ENCODE measurements at regions of chr2 and their contacts with region 1.

Region 1: DNA sequence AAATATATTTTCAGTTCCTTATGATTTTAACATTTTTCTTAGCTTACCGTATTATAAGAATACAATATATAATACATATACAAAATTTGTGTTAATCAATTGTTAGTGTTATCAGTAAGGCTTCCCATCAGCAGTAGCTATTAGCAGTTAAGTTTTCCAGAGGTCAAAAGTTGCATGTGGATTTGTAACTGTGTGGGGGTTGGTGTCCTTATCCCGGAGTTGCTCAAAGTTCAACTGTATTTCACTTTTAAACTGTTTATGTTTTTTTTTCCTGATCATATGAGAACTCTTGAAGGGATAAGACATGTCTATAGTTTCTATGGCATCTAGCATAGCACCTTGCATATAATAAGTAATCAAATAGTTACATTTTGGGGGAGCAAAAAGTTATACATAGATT is 11.9 kb upstream of the MFSD6 start:
- DNase-seq: no peak
- ATAC-seq: no peak
- H3K4me3 Mint-ChIP-seq: no peak overlapping the region
- H3K27ac Mint-ChIP-seq: no peak overlapping the region
- H3K4me1 Mint-ChIP-seq: no peaks in the 10 kb centered on the region
- H3K27me3 Mint-ChIP-seq: peaks cover 26% of the 10 kb centered on the region

Region 2: GRCh38 chr2:190311893-190312634 is 84.2 kb before region 1 on chr2:
- CTCF ChIA-PET with region 1: no interaction called
- POLR2A ChIA-PET with region 1: no interaction called
- DNase-seq: no peak
- ATAC-seq: no peak
- H3K4me3 Mint-ChIP-seq: no peak overlapping the region
- H3K27ac Mint-ChIP-seq: no peak overlapping the region
- H3K4me1 Mint-ChIP-seq: peaks cover 10% of the 10 kb centered on the region
- H3K27me3 Mint-ChIP-seq: no peaks in the 10 kb centered on the region

Region 3: DNA sequence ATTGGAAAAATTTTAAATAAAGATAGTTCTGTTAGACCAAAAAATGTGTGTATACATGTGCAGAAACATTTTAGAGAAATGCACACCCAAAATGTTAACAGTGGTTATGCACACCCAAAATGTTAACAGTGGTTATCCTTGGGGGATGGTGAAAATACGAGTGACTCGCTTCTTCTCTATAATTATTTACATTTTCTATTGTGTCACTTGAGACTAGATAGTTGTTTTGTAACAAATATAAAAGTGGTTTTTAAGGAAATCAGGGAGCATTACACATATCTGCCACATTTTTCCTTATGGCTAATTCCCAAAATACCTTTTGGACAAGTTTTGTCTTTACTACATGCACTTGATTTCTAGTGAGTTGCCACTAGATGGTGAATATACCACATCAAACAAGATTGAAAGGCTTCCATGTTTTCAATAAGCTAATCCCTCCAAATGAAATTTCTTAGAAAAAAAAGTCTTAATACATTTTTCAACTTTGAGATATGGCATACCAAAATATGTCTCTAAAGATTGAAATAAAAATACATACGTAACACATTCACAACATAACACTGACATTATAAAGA is 67.6 kb before region 1 on chr2:
- CTCF ChIA-PET with region 1: no interaction called
- POLR2A ChIA-PET with region 1: no interaction called
- DNase-seq: no peak
- ATAC-seq: no peak
- H3K4me3 Mint-ChIP-seq: no peak overlapping the region
- H3K27ac Mint-ChIP-seq: no peak overlapping the region
- H3K4me1 Mint-ChIP-seq: no peaks in the 10 kb centered on the region
- H3K27me3 Mint-ChIP-seq: peaks cover 40% of the 10 kb centered on the region

Region 4: DNA sequence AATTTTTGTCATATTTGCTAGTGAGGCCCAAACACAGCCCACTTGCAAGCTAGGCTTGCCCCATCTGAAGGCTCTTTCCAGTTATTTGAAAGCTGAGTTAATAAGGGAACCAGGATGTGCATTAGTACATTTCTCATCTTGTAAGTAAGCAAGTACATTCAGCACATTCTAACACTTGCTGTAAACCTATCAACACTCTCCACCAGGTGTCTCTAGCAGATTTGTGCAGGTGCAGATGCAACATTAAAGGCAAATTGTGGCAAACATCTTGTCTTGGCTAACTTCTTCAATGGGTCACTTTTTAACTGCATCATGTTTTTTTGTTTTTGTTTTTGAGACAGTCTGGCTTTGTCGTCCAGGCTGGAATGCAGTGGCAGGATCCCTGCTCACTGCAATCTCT is 13.4 kb before region 1 on chr2:
- CTCF ChIA-PET with region 1: interaction called, 16 read pairs
- POLR2A ChIA-PET with region 1: no interaction called
- DNase-seq: peak; percentile 62
- ATAC-seq: peak; percentile 85
- H3K4me3 Mint-ChIP-seq: no peak overlapping the region
- H3K27ac Mint-ChIP-seq: no peak overlapping the region
- H3K4me1 Mint-ChIP-seq: no peaks in the 10 kb centered on the region
- H3K27me3 Mint-ChIP-seq: peaks cover 3% of the 10 kb centered on the region

Measured in activated CD8-positive, alpha-beta T cell treated with anti-CD3 and anti-CD28 coated beads, Interleukin-2, amount 10 ng/mL, durations not matched to agents 7 days and 5 days (primary cell).